Naive thymus-derived CD4-positive, alpha-beta T cell (primary cell): ENCODE measurements at regions of chr1 and their contacts with region 1.

Region 1: GRCh38 chr1:207885129-207886032 is 25.5 kb downstream of the CD34 start:
- DNase-seq: peak; percentile 50 to 75 (median 68)
- ATAC-seq: peak; percentile 86
- H3K4me3 ChIP-seq: no peak overlapping the region
- H3K4me3 Mint-ChIP-seq: peak overlapping the region in 5 of 10 donors; percentile 21 to 91 (median 29)
- H3K27ac ChIP-seq: no peak overlapping the region
- H3K27ac Mint-ChIP-seq: peak overlapping the region; percentile 63 to 99 (median 96)
- H3K4me1 ChIP-seq: peaks cover 21 to 25% of the 10 kb centered on the region in 2 donors
- H3K4me1 Mint-ChIP-seq: peaks cover 34 to 47% (median 44%) of the 10 kb centered on the region in 7 donors
- H3K27me3 ChIP-seq: no peaks in the 10 kb centered on the region
- H3K27me3 Mint-ChIP-seq: peaks cover 0 to 14% (median 5%) of the 10 kb centered on the region in 5 donors

Region 2: GRCh38 chr1:207751790-207752455 is 133.5 kb before region 1 on chr1 and contains the start of gene CD46:
- CTCF ChIA-PET with region 1: interaction called, 4 read pairs
- POLR2A ChIA-PET with region 1: no interaction called
- intact Hi-C with region 1: loop called in 1 of 2 experiments (anchors 5 kb)
- DNase-seq: peak; percentile 88 to 95 (median 90)
- ATAC-seq: peak; percentile 99
- H3K4me3 ChIP-seq: peak within 1 kb of the TSS; percentile 92
- H3K4me3 Mint-ChIP-seq: peak within 1 kb of the TSS; percentile 94 to 100 (median 99)
- H3K27ac ChIP-seq: peak within 1 kb of the TSS; percentile 90
- H3K27ac Mint-ChIP-seq: peak within 1 kb of the TSS; percentile 96 to 99 (median 97)
- H3K4me1 ChIP-seq: peaks cover 27 to 50% of the 10 kb centered on the region in 2 donors
- H3K4me1 Mint-ChIP-seq: peaks cover 49 to 93% (median 86%) of the 10 kb centered on the region in 7 donors
- H3K27me3 ChIP-seq: no peaks in the 10 kb centered on the region
- H3K27me3 Mint-ChIP-seq: peaks cover 0 to under 1% (median 0%) of the 10 kb centered on the region in 5 donors
- total RNA-seq, gene CD46: 121 to 216 (median 127) TPM

Region 3: GRCh38 chr1:207868774-207869721 is 16.3 kb before region 1 on chr1:
- CTCF ChIA-PET with region 1: interaction called, 197 read pairs
- POLR2A ChIA-PET with region 1: interaction called, 64 read pairs
- intact Hi-C with region 1: loop called (anchors 1 kb)
- DNase-seq: peak; percentile 57 to 86 (median 79)
- ATAC-seq: peak; percentile 79
- H3K4me3 ChIP-seq: peak overlapping the region; percentile 86
- H3K4me3 Mint-ChIP-seq: peak overlapping the region; percentile 74 to 99 (median 94)
- H3K27ac ChIP-seq: peak overlapping the region; percentile 78
- H3K27ac Mint-ChIP-seq: peak overlapping the region; percentile 91 to 98 (median 93)
- H3K4me1 ChIP-seq: peaks cover 39 to 80% of the 10 kb centered on the region in 2 donors
- H3K4me1 Mint-ChIP-seq: peaks cover 52 to 85% (median 77%) of the 10 kb centered on the region in 7 donors
- H3K27me3 ChIP-seq: no peaks in the 10 kb centered on the region
- H3K27me3 Mint-ChIP-seq: no peaks in the 10 kb centered on the region

Region 4: GRCh38 chr1:207925210-207925609 is 39.8 kb after region 1 on chr1:
- CTCF ChIA-PET with region 1: no interaction called
- POLR2A ChIA-PET with region 1: no interaction called
- intact Hi-C with region 1: no loop called
- DNase-seq: no peak
- ATAC-seq: no peak
- H3K4me3 ChIP-seq: no peak overlapping the region
- H3K4me3 Mint-ChIP-seq: no peak overlapping the region
- H3K27ac ChIP-seq: no peak overlapping the region
- H3K27ac Mint-ChIP-seq: no peak overlapping the region
- H3K4me1 ChIP-seq: no peaks in the 10 kb centered on the region
- H3K4me1 Mint-ChIP-seq: peaks cover 0 to 4% (median 0%) of the 10 kb centered on the region in 7 donors
- H3K27me3 ChIP-seq: no peaks in the 10 kb centered on the region
- H3K27me3 Mint-ChIP-seq: peaks cover 18 to 66% (median 27%) of the 10 kb centered on the region in 5 donors

Region 5: GRCh38 chr1:207981976-207982375 is 96.6 kb after region 1 on chr1:
- CTCF ChIA-PET with region 1: no interaction called
- POLR2A ChIA-PET with region 1: no interaction called
- intact Hi-C with region 1: no loop called
- DNase-seq: no peak
- ATAC-seq: no peak
- H3K4me3 ChIP-seq: no peak overlapping the region
- H3K4me3 Mint-ChIP-seq: no peak overlapping the region
- H3K27ac ChIP-seq: no peak overlapping the region
- H3K27ac Mint-ChIP-seq: no peak overlapping the region
- H3K4me1 ChIP-seq: no peaks in the 10 kb centered on the region
- H3K4me1 Mint-ChIP-seq: peaks cover 0 to 1% (median 0%) of the 10 kb centered on the region in 7 donors
- H3K27me3 ChIP-seq: no peaks in the 10 kb centered on the region
- H3K27me3 Mint-ChIP-seq: peaks cover 22 to 37% (median 32%) of the 10 kb centered on the region in 5 donors

Region 6: GRCh38 chr1:207997486-207998268 is 112.3 kb after region 1 on chr1:
- CTCF ChIA-PET with region 1: interaction called, 6 read pairs
- POLR2A ChIA-PET with region 1: interaction called, 3 read pairs
- intact Hi-C with region 1: loop called (anchors 1 kb)
- DNase-seq: peak in 7 of 9 donors; percentile 26 to 46 (median 30)
- ATAC-seq: peak; percentile 82
- H3K4me3 ChIP-seq: no peak overlapping the region
- H3K4me3 Mint-ChIP-seq: no peak overlapping the region
- H3K27ac ChIP-seq: no peak overlapping the region
- H3K27ac Mint-ChIP-seq: no peak overlapping the region
- H3K4me1 ChIP-seq: no peaks in the 10 kb centered on the region
- H3K4me1 Mint-ChIP-seq: no peaks in the 10 kb centered on the region
- H3K27me3 ChIP-seq: no peaks in the 10 kb centered on the region
- H3K27me3 Mint-ChIP-seq: peaks cover 7 to 29% (median 12%) of the 10 kb centered on the region in 5 donors

Region 7: DNA sequence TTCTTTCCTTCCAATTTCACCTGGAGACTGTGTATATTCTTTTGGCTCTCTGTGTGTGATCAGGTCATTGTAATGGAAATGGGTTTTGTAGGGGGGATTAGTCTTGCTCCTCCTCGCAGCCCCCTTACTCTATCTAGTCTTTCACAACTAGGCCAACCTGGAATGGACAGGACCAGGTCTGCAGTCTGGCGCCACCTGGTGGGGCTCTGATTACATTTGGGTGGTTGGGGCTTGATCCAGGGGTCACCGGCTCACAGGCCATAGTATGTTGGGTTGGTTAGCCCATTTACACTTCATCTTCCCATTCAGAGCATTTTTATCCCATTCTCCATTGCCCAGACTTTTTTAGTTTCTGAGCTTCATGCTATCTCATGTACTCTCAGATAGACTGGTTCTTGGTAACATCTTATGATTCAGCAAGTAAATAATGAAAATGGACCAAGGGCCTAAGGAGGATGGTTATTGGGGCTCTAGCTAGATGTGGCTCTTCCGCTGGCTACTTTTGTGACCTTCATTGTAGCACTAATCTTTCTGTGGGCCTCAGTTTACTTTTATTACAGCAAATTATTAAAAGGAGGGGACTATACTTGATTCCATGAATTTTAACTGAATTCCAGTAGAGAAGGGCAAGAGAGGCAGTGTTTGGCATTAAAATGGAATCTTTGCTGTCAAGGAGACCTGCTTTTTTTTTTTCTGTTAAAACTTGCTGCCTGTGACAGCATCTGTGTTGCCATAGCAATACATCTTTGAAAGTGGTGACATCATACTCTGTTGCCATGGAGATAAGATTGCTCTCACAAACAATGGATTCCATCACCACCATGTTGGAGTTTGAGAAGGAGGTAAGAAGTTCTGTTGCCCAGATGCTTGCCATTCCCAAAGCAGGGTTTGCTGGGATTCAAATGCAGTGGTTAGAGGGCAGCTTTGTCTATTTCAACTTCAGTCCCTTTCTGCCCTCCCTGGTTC is 208.7 kb after region 1 on chr1:
- CTCF ChIA-PET with region 1: no interaction called
- POLR2A ChIA-PET with region 1: no interaction called
- intact Hi-C with region 1: loop called in 1 of 2 experiments (anchors 2 kb)
- DNase-seq: peak; percentile 21 to 62 (median 49)
- ATAC-seq: peak; percentile 62
- H3K4me3 ChIP-seq: no peak overlapping the region
- H3K4me3 Mint-ChIP-seq: no peak overlapping the region
- H3K27ac ChIP-seq: no peak overlapping the region
- H3K27ac Mint-ChIP-seq: peak overlapping the region in 2 of 9 donors; percentile 4 to 54
- H3K4me1 ChIP-seq: no peaks in the 10 kb centered on the region
- H3K4me1 Mint-ChIP-seq: no peaks in the 10 kb centered on the region
- H3K27me3 ChIP-seq: no peaks in the 10 kb centered on the region
- H3K27me3 Mint-ChIP-seq: peaks cover 0 to 3% (median 0%) of the 10 kb centered on the region in 5 donors